ENCODE measurements at regions of chr12 and their contacts with region 1.

Region 1: DNA sequence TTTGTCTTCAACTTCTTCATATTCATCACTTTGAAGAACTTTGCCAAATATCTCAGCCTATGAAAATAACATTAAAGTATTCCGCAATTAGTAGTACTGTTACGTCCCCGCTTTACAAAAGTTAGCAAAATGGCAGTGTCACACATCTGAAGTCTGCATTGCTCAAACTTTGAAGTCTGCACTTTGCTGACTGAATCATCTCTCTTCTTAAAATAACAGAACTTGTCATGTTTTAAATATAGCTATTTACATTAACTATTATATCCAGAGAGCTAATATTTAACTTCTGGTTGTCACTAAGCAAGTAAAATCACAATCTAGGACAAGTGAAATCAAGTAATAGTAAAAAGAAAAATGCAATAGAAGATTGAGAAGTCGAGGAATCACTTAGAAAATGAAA is 34.5 kb downstream of the IPO8 start:
- DNase-seq: no peak
- H3K4me3 ChIP-seq: no peak overlapping the region
- H3K27ac ChIP-seq: no peak overlapping the region
- H3K27me3 ChIP-seq: no peaks in the 10 kb centered on the region
- CTCF ChIP-seq: no peak

Region 2: DNA sequence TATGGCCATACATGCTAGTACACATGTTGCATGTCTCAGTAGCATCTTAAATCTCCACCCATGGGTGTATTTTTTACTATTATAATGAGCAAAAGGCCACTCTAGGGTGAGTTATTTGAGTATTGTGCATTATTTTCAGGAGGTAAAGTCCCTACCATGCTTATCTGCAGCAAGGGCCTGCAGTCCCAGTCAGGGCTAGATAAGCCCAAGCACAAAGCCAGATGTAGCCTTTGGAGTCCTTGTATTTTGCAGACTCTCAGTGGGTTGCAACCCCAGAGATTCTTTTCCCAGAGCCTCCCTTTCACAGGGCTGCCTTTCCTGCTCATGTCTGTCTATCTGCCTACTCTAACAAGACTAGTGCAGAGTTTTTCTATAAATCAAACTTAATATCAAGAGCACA is 260.9 kb before region 1 on chr12:
- intact Hi-C with region 1: no loop called
- DNase-seq: no peak
- H3K4me3 ChIP-seq: no peak overlapping the region
- H3K27ac ChIP-seq: no peak overlapping the region
- H3K27me3 ChIP-seq: no peaks in the 10 kb centered on the region
- CTCF ChIP-seq: no peak

Region 3: GRCh38 chr12:30570211-30570890 is 90.9 kb before region 1 on chr12:
- intact Hi-C with region 1: no loop called
- DNase-seq: no peak
- H3K4me3 ChIP-seq: no peak overlapping the region
- H3K27ac ChIP-seq: no peak overlapping the region
- H3K27me3 ChIP-seq: peaks cover 0 to 6% (median 0%) of the 10 kb centered on the region in 45 donors
- CTCF ChIP-seq: no peak

Region 4: GRCh38 chr12:30631740-30632139 is 29.5 kb before region 1 on chr12:
- intact Hi-C with region 1: loop called in 1 of 2 experiments (anchors 2 kb)
- DNase-seq: no peak
- H3K4me3 ChIP-seq: no peak overlapping the region
- H3K27ac ChIP-seq: no peak overlapping the region
- H3K27me3 ChIP-seq: no peaks in the 10 kb centered on the region
- CTCF ChIP-seq: no peak

Region 5: DNA sequence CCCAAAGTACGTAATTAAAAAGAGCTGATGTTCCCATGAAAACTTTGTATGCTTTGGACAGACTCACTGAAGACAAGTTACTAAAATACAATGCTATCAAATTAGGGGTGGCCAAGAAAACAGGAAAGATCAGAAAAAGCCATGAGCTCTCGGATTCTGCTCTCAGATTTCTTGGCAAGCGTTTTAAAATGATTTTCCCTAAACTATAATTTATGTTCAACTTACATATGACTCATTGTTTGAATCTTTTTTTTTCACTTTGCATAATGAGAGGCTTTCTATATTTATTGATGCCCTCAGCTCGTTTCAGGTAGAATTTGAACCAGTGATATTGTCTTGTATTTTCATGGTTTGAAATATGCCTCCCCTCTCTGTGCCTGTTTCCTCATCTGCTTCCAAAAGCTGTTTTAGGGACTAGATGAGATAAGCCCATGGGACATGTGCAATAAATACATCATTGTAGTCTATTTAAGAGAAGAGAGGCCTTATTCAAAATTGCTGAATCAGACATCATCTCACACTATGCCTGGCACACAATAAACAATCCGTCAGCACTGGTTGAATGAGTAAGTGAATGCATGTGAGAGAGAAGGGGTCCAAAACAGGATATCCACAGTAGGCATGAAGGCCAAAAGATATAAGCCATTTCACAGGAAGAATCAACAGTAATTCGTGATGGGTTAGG is 39.1 kb after region 1 on chr12:
- intact Hi-C with region 1: no loop called
- DNase-seq: no peak
- H3K4me3 ChIP-seq: no peak overlapping the region
- H3K27ac ChIP-seq: peak overlapping the region in 32 of 59 donors; percentile 2 to 75 (median 44)
- H3K27me3 ChIP-seq: no peaks in the 10 kb centered on the region
- CTCF ChIP-seq: no peak